Left ventricle myocardium superior (tissue), 1 donor: ENCODE measurements at regions of chr5 and their contacts with region 1.

Region 1: GRCh38 chr5:66324357-66324756 is 180.3 kb downstream of the SREK1 start:
- DNase-seq: peak; percentile 77
- ATAC-seq: peak; percentile 84

Region 2: DNA sequence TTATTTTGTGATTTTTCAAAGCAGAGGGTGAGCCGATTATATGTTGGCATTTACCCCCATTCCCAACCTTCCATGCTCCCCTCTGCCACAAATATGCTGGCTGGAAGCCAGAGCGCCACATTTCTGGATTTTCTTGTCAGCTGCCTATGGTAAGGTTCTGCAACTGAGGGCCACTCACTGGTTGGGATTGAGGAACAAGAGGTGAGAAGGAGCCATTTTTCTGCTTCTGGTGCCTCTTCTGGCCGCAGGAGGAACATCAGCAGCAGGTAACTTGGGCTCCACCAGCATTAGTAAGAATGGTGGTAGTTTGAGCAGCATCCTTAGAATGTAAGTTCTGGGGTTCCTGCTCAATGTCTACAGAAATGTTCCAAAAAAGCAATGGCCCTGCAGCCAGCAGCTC is 112.4 kb after region 1 on chr5:
- intact Hi-C with region 1: loop called (anchors 10 kb)
- DNase-seq: no peak
- ATAC-seq: peak; percentile 45